Posterior cingulate gyrus (tissue), 11 donors: ENCODE measurements at regions of chr10 and their contacts with region 1.

Region 1: GRCh38 chr10:17742918-17743317 is 9.1 kb upstream of the TMEM236 start:
- DNase-seq: peak in 7 of 10 donors; percentile 46 to 91 (median 67)

Region 2: DNA sequence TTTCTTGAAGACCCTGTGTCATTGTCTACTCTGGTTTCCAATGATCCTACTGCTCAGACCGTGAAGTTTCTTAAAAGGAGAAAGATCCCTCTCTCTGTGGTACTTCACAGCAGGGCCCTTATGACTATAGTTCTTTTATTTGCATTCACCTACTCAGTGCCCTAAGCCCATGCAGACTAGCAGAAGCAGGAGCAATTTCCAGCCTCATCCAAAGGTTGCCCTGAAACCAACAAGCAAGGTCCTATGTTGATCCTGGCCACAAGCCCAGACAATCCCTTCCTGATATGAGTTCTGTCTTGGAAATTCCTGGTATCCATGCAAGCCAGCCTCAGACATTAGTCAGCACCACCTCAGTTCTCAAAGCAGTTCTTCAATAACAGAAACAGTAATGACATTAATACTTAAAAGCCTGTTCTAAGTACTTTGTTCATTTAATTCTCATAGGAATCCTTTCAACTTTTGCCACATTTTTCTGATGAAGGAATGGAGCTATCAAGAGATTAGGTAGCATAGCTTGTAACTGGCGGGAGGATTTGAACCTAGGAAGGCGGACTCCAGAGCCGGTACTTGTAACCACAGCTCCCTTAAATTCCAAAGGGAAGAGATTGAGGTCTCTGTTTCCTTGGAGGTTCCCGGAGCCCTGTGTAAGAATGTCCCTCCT is 230.4 kb before region 1 on chr10:
- intact Hi-C with region 1: no loop called
- DNase-seq: no peak

Region 3: DNA sequence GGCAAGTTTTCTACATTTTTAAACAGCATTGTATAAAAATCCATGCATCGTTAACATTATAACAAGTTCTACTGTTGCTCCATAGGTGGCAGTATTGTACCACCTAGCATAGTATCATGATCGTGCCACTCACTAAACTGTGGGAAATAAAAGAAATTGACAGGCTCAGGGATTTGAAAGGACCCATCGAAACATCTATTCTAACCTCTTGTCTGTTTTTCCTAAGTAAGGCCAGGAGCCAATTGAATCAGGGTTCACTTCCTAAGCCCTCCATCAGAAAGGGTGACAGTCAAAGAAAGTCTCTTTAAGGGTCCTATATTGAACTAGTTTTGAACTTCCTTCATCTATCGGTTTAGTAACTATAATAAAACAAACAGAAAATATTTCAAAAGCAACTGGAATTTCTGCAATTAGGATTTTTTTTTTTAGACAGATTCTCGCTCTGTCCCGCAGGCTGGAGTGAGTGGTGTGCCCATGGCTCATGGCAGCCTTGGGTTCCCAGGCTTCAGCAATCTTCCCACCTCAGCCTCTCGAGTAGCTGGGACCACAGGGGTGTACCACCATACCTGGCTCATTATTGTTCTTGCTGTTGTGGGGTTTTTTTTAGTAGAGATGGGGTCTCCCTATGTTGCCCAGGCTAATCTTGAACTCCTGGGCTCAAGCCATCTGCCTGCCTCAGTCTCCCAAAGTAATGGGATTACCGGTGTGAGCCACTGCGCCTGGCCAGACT is 135.2 kb before region 1 on chr10:
- intact Hi-C with region 1: loop called (anchors 1 kb)
- DNase-seq: no peak

Region 4: DNA sequence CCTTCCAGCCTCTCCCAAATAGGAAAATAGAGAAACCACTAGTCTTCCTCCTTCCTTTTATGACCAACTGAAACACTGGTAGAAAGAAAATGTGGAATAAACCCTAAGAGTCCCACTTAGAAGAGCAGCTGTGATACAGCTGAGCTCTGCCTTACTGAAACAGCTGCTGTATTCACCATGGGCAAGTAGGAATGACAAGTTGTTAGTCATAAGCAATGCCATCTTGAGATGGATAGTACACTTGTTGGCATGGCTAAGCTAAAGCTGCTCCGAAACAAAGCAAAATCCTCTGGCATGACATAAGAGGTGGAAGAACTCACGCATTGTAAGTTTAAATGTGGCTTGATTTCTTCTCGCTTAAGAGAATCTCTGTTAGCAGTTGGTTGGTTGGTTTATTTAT is 39.2 kb before region 1 on chr10:
- intact Hi-C with region 1: no loop called
- DNase-seq: no peak